Aorta (tissue), 5 donors: ENCODE measurements at regions of chr15 and their contacts with region 1.

Region 1: GRCh38 chr15:58340176-58340575 is 91.6 kb upstream of the LIPC start:
- DNase-seq: no peak
- ATAC-seq: no peak
- H3K4me3 ChIP-seq: no peak overlapping the region
- H3K27ac ChIP-seq: no peak overlapping the region
- H3K4me1 ChIP-seq: no peaks in the 10 kb centered on the region
- H3K27me3 ChIP-seq: no peaks in the 10 kb centered on the region

Region 2: DNA sequence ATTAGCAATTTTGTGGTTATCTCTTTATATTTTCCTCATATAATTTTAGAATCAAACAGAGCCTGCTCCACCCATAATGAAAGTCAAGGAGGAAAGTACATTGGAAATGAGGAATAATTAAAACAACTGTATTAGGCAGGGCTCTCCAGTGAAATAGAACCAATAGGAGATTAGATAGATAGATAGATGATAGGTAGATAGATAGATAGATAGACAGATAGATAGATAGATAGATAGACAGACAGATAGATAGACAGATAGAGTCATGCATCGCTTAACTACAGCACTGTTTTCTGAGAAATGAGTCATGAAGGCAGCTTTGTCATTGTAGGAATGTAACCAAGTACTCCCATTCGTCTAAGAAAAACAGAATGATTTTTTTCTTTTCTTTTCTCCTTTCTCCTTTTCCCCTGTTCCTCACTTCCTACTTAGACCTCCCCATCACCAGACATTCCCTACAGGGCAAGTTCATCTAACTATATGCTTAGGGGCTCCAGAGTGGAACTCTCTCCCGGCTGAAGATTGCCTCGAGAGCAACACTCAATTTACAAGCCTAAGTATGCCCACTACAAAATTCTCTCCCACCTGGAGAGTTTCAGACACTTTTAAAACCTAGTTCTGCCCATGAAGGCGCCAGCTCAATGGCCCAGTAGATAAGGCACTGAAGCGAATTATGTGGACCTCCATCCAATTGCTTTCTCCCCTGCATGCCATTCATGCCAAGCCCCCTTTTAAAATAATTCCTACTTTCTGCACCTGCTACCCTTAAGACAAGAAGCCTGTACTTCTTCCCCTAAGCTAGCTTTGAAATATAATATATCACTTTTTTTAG is 38.3 kb after region 1 on chr15:
- intact Hi-C with region 1: loop called in 1 of 2 experiments (anchors 5 kb)
- DNase-seq: no peak
- ATAC-seq: no peak
- H3K4me3 ChIP-seq: no peak overlapping the region
- H3K27ac ChIP-seq: no peak overlapping the region
- H3K4me1 ChIP-seq: no peaks in the 10 kb centered on the region
- H3K27me3 ChIP-seq: no peaks in the 10 kb centered on the region

Region 3: GRCh38 chr15:59283717-59284336 is 943.7 kb after region 1 on chr15:
- intact Hi-C with region 1: no loop called
- DNase-seq: no peak
- ATAC-seq: no peak
- H3K4me3 ChIP-seq: no peak overlapping the region
- H3K27ac ChIP-seq: no peak overlapping the region
- H3K4me1 ChIP-seq: peaks cover 0 to 3% of the 10 kb centered on the region in 2 donors
- H3K27me3 ChIP-seq: no peaks in the 10 kb centered on the region